Activated CD4-positive, alpha-beta memory T cell treated with anti-CD3 and anti-CD28 coated beads for 36 hours (primary cell): ENCODE measurements at regions of chr2 and their contacts with region 1.

Region 1: DNA sequence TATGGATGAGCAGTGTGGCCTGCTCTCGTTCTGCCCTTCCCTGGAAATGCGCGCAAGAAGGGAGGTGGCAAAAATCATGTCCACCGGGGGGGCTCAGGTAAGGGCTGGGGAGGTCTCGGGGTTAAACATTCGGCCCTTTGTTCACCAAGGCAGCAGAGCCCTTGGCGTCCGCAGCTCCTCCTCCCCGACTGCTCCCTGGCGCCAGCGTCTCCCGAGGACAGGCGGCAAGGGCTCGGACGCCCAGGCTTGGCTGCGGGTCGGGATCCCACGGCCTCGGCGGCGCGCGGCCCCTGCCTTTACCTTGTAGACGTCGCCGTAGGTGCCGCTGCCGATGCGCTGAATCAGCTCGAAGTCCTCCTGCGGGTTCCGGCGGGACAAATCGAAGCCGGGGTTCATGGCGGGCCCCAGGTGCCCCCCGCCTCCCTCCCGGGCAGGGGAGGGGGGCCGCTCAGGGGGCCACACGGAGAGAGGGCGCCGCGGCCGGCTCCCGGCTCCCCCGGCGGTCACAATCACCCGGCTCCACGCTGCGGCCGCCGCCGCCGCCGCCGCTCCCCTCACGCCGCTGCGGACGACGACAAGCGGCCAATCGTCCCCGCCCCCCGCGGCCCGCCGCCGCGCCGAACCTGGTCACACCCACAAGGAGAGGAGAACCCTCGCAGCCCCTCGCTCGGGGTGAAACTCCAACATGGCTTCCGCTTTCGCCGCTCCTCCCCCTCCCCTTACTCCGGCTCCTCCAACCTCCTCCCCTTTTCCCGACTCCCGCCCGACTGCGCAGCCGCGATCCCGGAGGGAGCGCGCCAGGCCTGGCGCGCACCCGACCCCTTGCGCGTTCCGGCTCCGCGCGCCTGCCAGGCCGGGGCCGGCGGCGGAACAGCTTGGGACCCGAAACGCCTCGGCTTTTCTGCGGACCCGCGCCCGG is at the start of gene MAP4K3:
- DNase-seq: peak; percentile 87
- H3K4me3 Mint-ChIP-seq: peak within 1 kb of the TSS; percentile 84
- H3K27ac Mint-ChIP-seq: peak within 1 kb of the TSS; percentile 82
- H3K4me1 Mint-ChIP-seq: peaks cover 65% of the 10 kb centered on the region
- H3K27me3 Mint-ChIP-seq: no peaks in the 10 kb centered on the region
- total RNA-seq, gene MAP4K3: 9.9 to 10.1 TPM

Region 2: DNA sequence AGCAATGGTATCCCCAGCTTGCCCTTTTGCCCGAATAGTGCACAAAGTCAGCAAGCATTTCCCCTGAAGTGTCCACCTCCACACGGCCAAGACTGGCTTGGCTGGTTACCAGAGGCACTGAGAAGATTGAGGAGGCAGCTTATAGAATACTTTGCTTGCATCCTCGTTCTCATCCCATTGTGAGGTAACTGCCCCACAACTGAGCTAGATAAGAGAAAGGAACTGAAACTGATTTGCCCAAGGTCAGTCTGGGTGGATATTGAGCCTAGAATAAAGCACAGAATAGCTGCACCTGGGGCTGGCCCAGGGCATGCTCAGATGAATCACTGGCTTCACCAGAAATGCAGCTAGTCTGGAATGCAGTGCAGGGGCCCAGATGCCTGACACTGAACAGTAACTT is 33.0 kb after region 1 on chr2:
- CTCF ChIA-PET with region 1: no interaction called
- POLR2A ChIA-PET with region 1: no interaction called
- intact Hi-C with region 1: loop called (anchors 2 kb)
- DNase-seq: peak; percentile 36
- H3K4me3 Mint-ChIP-seq: no peak overlapping the region
- H3K27ac Mint-ChIP-seq: no peak overlapping the region
- H3K4me1 Mint-ChIP-seq: peaks cover 31% of the 10 kb centered on the region
- H3K27me3 Mint-ChIP-seq: no peaks in the 10 kb centered on the region

Region 3: GRCh38 chr2:39772086-39772811 is 335.4 kb after region 1 on chr2:
- CTCF ChIA-PET with region 1: no interaction called
- POLR2A ChIA-PET with region 1: no interaction called
- intact Hi-C with region 1: loop called (anchors 2 kb)
- DNase-seq: no peak
- H3K4me3 Mint-ChIP-seq: no peak overlapping the region
- H3K27ac Mint-ChIP-seq: no peak overlapping the region
- H3K4me1 Mint-ChIP-seq: peaks cover 45% of the 10 kb centered on the region
- H3K27me3 Mint-ChIP-seq: no peaks in the 10 kb centered on the region